H1 (cell line): ENCODE measurements at regions of chr5 and their contacts with region 1.

Region 1: GRCh38 chr5:139872052-139872766 is 76.6 kb downstream of the PSD2 start:
- DNase-seq: no peak
- H3K4me3 ChIP-seq: no peak overlapping the region
- H3K27ac ChIP-seq: no peak overlapping the region
- H3K4me1 ChIP-seq: peaks cover 0 to 9% (median 5%) of the 10 kb centered on the region in 4 experiments; a peak in 6 of 7 replicates
- H3K27me3 ChIP-seq: peaks cover 0 to 2% (median 0%) of the 10 kb centered on the region in 4 experiments; a peak in 2 of 7 replicates
- CTCF ChIP-seq: peak; percentile 64 to 73 (median 67)
- EP300 ChIP-seq: no peak
- POLR2A ChIP-seq: no peak
- RAD21 ChIP-seq: peak; percentile 51 to 64

Region 2: GRCh38 chr5:139817362-139817761 is 54.8 kb before region 1 on chr5:
- CTCF ChIA-PET with region 1: no interaction called
- POLR2A ChIA-PET with region 1: no interaction called
- DNase-seq: no peak
- H3K4me3 ChIP-seq: no peak overlapping the region
- H3K27ac ChIP-seq: no peak overlapping the region
- H3K4me1 ChIP-seq: peaks cover 0 to 2% (median under 1%) of the 10 kb centered on the region in 4 experiments; a peak in 3 of 7 replicates
- H3K27me3 ChIP-seq: peaks cover 0 to 2% (median 0%) of the 10 kb centered on the region in 4 experiments; a peak in 1 of 7 replicates
- CTCF ChIP-seq: no peak
- EP300 ChIP-seq: no peak
- POLR2A ChIP-seq: no peak
- RAD21 ChIP-seq: no peak

Region 3: GRCh38 chr5:139844472-139845145 is 27.6 kb before region 1 on chr5:
- CTCF ChIA-PET with region 1: interaction called, 12 read pairs
- POLR2A ChIA-PET with region 1: no interaction called
- DNase-seq: peak; percentile 64 to 92
- H3K4me3 ChIP-seq: no peak overlapping the region
- H3K27ac ChIP-seq: no peak overlapping the region
- H3K4me1 ChIP-seq: peaks cover 0 to 2% (median 1%) of the 10 kb centered on the region in 4 experiments; a peak in 5 of 7 replicates
- H3K27me3 ChIP-seq: peaks cover 16 to 50% (median 44%) of the 10 kb centered on the region in 4 experiments
- CTCF ChIP-seq: peak; percentile 93 to 97 (median 96)
- EP300 ChIP-seq: no peak
- POLR2A ChIP-seq: no peak
- RAD21 ChIP-seq: peak; percentile 88 to 90

Region 4: GRCh38 chr5:139888370-139888769 is 16.2 kb after region 1 on chr5:
- CTCF ChIA-PET with region 1: interaction called, 31 read pairs
- POLR2A ChIA-PET with region 1: no interaction called
- DNase-seq: no peak
- H3K4me3 ChIP-seq: no peak overlapping the region
- H3K27ac ChIP-seq: no peak overlapping the region
- H3K4me1 ChIP-seq: 0 out of 7 replicates have a peak, but pooled peaks cover 0 to under 1% (median 0%) of the 10 kb centered on the region in 4 experiments
- H3K27me3 ChIP-seq: peaks cover 0 to 2% (median under 1%) of the 10 kb centered on the region in 4 experiments; a peak in 4 of 7 replicates
- CTCF ChIP-seq: no peak
- EP300 ChIP-seq: no peak
- POLR2A ChIP-seq: no peak
- RAD21 ChIP-seq: no peak

Region 5: DNA sequence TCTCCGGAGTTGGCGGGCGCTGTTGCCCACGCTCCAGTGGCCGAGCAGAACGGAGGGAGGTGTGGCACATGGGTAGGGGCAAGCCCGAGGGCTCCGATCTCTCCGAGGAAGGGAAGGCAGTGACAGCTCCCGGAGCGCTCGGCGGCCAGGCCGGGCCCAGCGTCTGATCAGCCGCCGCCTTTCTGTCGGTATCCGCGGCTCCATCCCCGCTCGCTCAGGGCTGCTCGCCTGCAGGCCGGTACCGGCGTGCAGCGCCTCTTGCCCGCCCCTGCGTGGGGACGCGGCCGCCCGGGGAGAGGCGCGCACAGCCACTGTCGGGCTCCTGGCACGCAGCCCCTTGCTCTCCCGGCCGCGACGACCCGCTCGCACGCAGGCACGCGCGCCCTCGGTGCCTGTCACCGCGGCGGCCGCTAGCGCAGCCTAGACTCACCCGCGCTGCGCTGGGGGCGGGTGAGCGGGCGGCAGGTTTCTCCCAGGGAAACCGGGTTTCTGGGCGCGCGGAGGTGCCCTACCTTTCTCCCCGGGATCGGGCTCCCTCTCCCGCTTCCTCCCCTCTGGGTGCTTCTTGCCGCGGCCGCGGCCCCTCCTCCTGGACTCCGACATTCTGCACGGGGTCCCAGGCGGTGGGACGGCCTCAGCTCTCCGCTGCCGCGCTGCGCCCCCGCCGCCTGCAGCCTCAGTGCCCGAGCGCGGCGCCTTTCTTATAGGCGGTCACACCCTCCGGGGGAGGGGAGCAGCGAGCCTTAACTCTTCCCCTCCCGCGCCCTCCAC is 31.8 kb after region 1 on chr5:
- CTCF ChIA-PET with region 1: interaction called, 12 read pairs
- POLR2A ChIA-PET with region 1: no interaction called
- DNase-seq: peak in 1 of 2 experiments; percentile 78
- H3K4me3 ChIP-seq: peak overlapping the region; percentile 37 to 81 (median 59)
- H3K27ac ChIP-seq: no peak overlapping the region
- H3K4me1 ChIP-seq: peaks cover 0 to 23% (median 10%) of the 10 kb centered on the region in 4 experiments; a peak in 6 of 7 replicates
- H3K27me3 ChIP-seq: peaks cover 35 to 77% (median 59%) of the 10 kb centered on the region in 4 experiments
- CTCF ChIP-seq: no peak
- EP300 ChIP-seq: no peak
- POLR2A ChIP-seq: no peak
- RAD21 ChIP-seq: no peak

Region 6: GRCh38 chr5:139955053-139955605 is 82.9 kb after region 1 on chr5:
- CTCF ChIA-PET with region 1: interaction called, 14 read pairs
- POLR2A ChIA-PET with region 1: no interaction called
- DNase-seq: no peak
- H3K4me3 ChIP-seq: no peak overlapping the region
- H3K27ac ChIP-seq: no peak overlapping the region
- H3K4me1 ChIP-seq: peaks cover 2 to 14% (median 6%) of the 10 kb centered on the region in 4 experiments; a peak in 6 of 7 replicates
- H3K27me3 ChIP-seq: no peaks in the 10 kb centered on the region; a peak in 1 of 7 replicates
- CTCF ChIP-seq: no peak
- EP300 ChIP-seq: no peak
- POLR2A ChIP-seq: no peak
- RAD21 ChIP-seq: no peak

Region 7: GRCh38 chr5:140094889-140095288 is 222.7 kb after region 1 on chr5:
- CTCF ChIA-PET with region 1: no interaction called
- POLR2A ChIA-PET with region 1: no interaction called
- DNase-seq: no peak
- H3K4me3 ChIP-seq: no peak overlapping the region
- H3K27ac ChIP-seq: no peak overlapping the region
- H3K4me1 ChIP-seq: no peaks in the 10 kb centered on the region
- H3K27me3 ChIP-seq: no peaks in the 10 kb centered on the region
- CTCF ChIP-seq: no peak
- EP300 ChIP-seq: no peak
- POLR2A ChIP-seq: no peak
- RAD21 ChIP-seq: no peak